Adrenal gland (tissue), 19 donors: ENCODE measurements at regions of chr5 and their contacts with region 1.

Region 1: DNA sequence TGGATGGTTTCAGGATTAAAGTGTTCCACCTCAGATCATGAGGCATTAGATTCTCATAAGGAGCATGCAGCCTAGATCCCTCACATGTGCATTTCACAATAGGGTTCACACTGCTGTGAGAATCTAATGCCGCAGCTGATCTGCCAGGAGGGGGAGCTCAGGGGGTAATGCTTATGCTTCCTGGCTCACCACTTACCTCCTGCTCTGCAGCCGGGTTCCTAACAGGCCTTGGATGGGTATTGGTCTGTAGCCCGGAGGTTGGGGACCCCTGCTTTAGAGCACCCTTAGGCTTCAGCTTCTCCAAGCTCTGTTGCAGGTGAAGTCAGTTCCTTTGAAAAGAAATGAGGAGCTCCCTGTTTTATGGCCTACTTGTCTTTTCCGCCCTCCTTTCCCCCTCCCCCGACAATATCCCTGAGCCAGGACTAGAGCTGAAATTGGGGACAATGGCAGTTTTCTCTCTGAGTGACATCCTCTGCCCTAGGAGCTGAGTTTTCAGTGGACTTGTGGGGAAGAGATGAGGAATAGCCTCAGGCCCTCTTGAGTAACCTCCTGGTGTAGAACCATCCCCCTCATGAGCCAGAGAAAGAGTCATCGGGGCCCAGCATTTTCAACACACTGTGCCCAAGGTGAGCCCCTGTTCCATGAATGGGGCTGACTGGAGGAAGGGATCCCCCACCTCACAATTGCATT is 16.2 kb upstream of the MAT2B start:
- DNase-seq: no peak
- H3K4me3 ChIP-seq: no peak overlapping the region
- H3K27ac ChIP-seq: no peak overlapping the region
- H3K4me1 ChIP-seq: no peaks in the 10 kb centered on the region
- H3K27me3 ChIP-seq: no peaks in the 10 kb centered on the region
- CTCF ChIP-seq: no peak
- POLR2A ChIP-seq: no peak

Region 2: DNA sequence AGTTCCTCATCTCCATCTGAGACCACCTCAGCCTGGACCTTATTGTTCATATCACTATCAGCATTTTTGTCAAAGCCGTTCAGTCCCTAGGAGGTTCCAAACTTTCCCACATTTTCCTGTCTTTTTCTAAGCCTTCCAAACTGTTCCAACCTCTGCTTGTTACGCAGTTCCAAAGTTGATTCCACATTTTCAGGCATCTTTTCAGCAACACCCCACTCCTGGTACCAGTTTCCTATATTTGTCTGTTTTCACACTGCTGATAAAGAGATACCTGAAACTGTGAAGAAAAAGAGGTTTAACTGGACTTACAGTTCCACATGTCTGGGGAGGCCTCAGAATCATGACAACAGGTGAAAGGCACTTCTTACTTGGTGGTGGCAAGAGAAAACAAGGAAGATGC is 638.3 kb after region 1 on chr5:
- intact Hi-C with region 1: loop called in 1 of 2 experiments (anchors 5 kb)
- DNase-seq: no peak
- H3K4me3 ChIP-seq: no peak overlapping the region
- H3K27ac ChIP-seq: no peak overlapping the region
- H3K4me1 ChIP-seq: no peaks in the 10 kb centered on the region
- H3K27me3 ChIP-seq: no peaks in the 10 kb centered on the region
- CTCF ChIP-seq: no peak
- POLR2A ChIP-seq: no peak